Activated CD8-positive, alpha-beta T cell treated with anti-CD3 and anti-CD28 coated beads, Interleukin-2, amount 10 ng/mL, durations not matched to agents 7 days and 5 days (primary cell): ENCODE measurements at regions of chrX and their contacts with region 1.

Region 1: DNA sequence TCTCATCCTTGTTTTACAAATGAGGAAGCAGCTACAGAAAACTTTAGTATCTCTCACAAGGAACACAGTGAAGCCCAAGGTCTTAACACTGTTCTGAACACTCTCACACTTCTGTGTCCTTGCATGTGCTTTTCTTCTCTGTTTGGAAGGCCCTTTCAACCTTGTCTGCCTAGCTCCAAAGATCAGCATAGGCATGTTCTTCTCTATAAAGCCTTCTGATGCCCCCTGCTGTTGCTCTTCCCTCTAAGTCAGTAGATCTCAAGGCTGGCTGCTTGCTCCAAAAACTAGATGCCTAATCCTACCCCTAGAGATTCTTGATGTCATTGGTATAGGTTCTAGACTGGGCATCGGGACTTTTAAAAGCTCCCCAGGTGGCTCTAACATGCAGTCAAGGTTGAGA is 5.9 kb downstream of the APOO start:
- DNase-seq: peak; percentile 58
- ATAC-seq: peak; percentile 87
- H3K4me3 Mint-ChIP-seq: no peak overlapping the region
- H3K27ac Mint-ChIP-seq: no peak overlapping the region
- H3K4me1 Mint-ChIP-seq: peaks cover 14% of the 10 kb centered on the region
- H3K27me3 Mint-ChIP-seq: no peaks in the 10 kb centered on the region

Region 2: GRCh38 chrX:23694606-23695005 is 207.2 kb before region 1 on chrX:
- CTCF ChIA-PET with region 1: interaction called, 111 read pairs
- POLR2A ChIA-PET with region 1: interaction called, 3 read pairs
- DNase-seq: peak; percentile 52
- ATAC-seq: no peak
- H3K4me3 Mint-ChIP-seq: no peak overlapping the region
- H3K27ac Mint-ChIP-seq: no peak overlapping the region
- H3K4me1 Mint-ChIP-seq: peaks cover 2% of the 10 kb centered on the region
- H3K27me3 Mint-ChIP-seq: no peaks in the 10 kb centered on the region

Region 3: DNA sequence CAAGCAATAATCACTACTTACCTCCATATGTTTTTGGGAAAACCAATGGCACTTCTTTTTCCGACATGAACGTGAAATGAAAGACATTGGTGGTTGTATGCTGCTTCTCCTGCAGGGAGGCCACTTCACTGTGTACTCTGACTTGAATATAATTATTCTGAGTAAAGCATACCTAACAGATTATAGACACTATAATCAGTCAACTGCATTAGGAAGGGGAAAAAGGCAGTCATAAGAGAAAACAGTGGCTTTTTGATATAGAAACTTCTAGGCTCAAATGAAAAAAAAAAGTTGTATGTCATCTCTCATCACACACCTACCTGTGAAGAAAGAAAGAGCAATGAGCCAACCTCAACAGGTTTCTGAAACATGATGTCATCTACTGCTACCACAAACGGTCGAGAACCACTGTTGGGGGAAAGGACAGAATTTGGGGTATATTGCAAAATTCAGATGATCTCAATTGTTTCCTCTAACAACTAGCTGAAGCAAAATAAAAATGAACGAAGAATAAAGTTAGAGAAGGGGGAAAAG is 197.1 kb before region 1 on chrX:
- CTCF ChIA-PET with region 1: interaction called, 34 read pairs
- POLR2A ChIA-PET with region 1: no interaction called
- DNase-seq: no peak
- ATAC-seq: no peak
- H3K4me3 Mint-ChIP-seq: no peak overlapping the region
- H3K27ac Mint-ChIP-seq: no peak overlapping the region
- H3K4me1 Mint-ChIP-seq: peaks cover 8% of the 10 kb centered on the region
- H3K27me3 Mint-ChIP-seq: no peaks in the 10 kb centered on the region

Region 4: GRCh38 chrX:23756157-23756559 is 145.6 kb before region 1 on chrX:
- CTCF ChIA-PET with region 1: interaction called, 27 read pairs
- POLR2A ChIA-PET with region 1: interaction called, 5 read pairs
- DNase-seq: peak; percentile 79
- ATAC-seq: peak; percentile 85
- H3K4me3 Mint-ChIP-seq: no peak overlapping the region
- H3K27ac Mint-ChIP-seq: no peak overlapping the region
- H3K4me1 Mint-ChIP-seq: peaks cover 7% of the 10 kb centered on the region
- H3K27me3 Mint-ChIP-seq: no peaks in the 10 kb centered on the region

Region 5: DNA sequence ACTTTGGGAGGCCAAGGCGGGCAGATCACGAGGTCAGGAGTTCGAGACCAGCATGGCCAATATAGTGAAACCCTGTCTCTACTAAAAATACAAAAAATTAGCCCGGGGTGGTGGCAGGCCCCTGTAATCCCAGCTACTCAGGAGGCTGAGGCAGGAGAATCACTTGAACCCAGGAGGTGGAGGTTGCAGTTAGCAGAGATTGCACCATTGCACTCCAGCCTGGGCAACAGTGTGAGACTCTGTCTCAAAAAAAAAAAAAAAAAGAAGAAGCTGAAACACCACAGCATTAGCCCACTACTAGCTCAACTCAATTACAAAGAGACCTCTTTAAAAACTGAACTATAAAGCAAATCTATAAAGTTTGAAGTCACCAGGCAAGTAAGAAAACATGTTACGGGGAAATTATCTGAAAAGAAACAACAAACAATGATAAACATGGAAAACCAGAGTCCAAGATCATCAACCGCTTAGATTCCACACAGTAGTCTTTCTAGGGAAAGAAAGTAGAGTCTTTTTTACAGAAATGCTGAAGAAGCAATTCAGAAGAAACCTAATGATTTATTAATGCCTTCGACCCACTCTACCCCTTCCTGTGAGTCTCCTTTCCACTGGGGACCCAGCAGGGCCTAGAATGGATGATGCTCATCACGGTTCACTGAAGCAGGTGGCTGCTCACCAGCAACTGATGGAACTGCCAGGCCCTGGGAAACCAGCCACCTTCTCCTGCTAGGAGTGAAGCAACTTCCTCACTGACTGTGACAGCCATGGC is 112.2 kb before region 1 on chrX:
- CTCF ChIA-PET with region 1: interaction called, 106 read pairs
- POLR2A ChIA-PET with region 1: interaction called, 61 read pairs
- DNase-seq: no peak
- ATAC-seq: no peak
- H3K4me3 Mint-ChIP-seq: no peak overlapping the region
- H3K27ac Mint-ChIP-seq: no peak overlapping the region
- H3K4me1 Mint-ChIP-seq: peaks cover 16% of the 10 kb centered on the region
- H3K27me3 Mint-ChIP-seq: no peaks in the 10 kb centered on the region